Natural killer cell (primary cell): ENCODE measurements at regions of chr10 and their contacts with region 1.

Region 1: DNA sequence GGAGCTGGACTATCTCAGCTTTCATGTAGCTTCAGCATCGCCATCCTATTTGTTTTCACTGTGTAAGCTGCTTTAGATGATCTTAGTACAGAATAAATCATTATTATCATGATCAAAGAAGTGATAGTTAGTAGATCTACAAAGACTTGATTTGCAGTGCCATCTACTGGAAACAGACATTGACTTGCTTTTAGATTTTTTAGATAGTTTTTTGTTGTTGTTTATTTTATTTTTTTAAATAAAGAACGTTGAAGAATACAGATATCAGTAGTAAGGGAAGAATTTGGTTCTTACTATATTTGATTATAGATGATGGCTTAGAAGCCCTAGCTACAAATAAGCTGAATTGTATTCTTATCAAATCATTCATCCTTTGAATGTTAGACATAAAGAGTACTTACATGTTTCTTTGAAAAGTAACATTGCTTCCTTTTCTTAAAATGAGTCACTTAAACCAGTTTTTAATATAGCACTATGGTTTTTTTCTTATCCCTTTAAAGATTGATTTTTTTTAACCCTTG is 6.3 kb upstream of the SFMBT2 start:
- DNase-seq: peak in 1 of 2 donors; percentile 77
- ATAC-seq: peak in 2 of 3 donors; percentile 38 to 60
- H3K4me3 ChIP-seq: no peak overlapping the region
- H3K4me3 Mint-ChIP-seq: no peak overlapping the region
- H3K27ac ChIP-seq: no peak overlapping the region
- H3K27ac Mint-ChIP-seq: no peak overlapping the region
- H3K4me1 ChIP-seq: peaks cover 9% of the 10 kb centered on the region
- H3K4me1 Mint-ChIP-seq: peaks cover 7 to 10% of the 10 kb centered on the region in 2 donors
- H3K27me3 ChIP-seq: peaks cover 6% of the 10 kb centered on the region
- H3K27me3 Mint-ChIP-seq: peaks cover 0 to 8% of the 10 kb centered on the region in 2 donors
- CTCF ChIP-seq: peak; percentile 76

Region 2: DNA sequence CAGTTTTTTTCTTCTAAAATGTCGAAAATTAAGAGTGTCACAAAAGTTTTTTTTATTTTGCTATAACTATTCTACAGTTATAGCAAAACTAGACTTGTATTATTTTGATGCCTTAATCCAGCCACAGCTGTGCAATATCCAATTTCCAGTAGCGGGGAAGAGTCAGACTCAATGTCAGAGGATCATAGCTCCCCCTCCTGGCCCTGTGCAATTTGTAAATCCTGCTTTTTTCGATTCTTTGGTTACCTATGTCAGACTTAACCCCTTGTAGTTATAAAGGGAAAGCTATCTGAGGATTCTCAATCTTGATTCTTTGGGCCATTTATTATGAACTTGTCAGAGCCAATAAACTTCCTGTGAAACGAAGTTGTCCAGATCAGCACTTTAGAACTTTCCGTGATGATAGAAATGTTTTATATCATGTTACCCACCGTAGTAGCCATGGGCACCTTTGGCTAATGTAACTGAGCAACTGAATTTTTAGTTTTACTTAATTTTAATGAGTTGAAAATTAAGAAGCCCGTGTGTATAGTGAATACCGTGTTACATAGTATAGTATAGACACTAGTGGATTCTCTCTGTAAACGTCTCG is 749.4 kb before region 1 on chr10:
- intact Hi-C with region 1: loop called (anchors 5 kb)
- DNase-seq: peak in 1 of 2 donors; percentile 62
- ATAC-seq: no peak
- H3K4me3 ChIP-seq: no peak overlapping the region
- H3K4me3 Mint-ChIP-seq: no peak overlapping the region
- H3K27ac ChIP-seq: no peak overlapping the region
- H3K27ac Mint-ChIP-seq: no peak overlapping the region
- H3K4me1 ChIP-seq: peaks cover 3% of the 10 kb centered on the region
- H3K4me1 Mint-ChIP-seq: peaks cover 6 to 18% of the 10 kb centered on the region in 2 donors
- H3K27me3 ChIP-seq: no peaks in the 10 kb centered on the region
- H3K27me3 Mint-ChIP-seq: peaks cover 0 to 2% of the 10 kb centered on the region in 2 donors
- CTCF ChIP-seq: peak; percentile 25

Region 3: GRCh38 chr10:6843481-6843881 is 573.7 kb before region 1 on chr10:
- intact Hi-C with region 1: loop called (anchors 5 kb)
- DNase-seq: peak in 1 of 2 donors; percentile 30
- ATAC-seq: peak in 1 of 3 donors; percentile 55
- H3K4me3 ChIP-seq: no peak overlapping the region
- H3K4me3 Mint-ChIP-seq: no peak overlapping the region
- H3K27ac ChIP-seq: no peak overlapping the region
- H3K27ac Mint-ChIP-seq: no peak overlapping the region
- H3K4me1 ChIP-seq: no peaks in the 10 kb centered on the region
- H3K4me1 Mint-ChIP-seq: peaks cover 0 to 6% of the 10 kb centered on the region in 2 donors
- H3K27me3 ChIP-seq: no peaks in the 10 kb centered on the region
- H3K27me3 Mint-ChIP-seq: no peaks in the 10 kb centered on the region
- CTCF ChIP-seq: no peak

Region 4: GRCh38 chr10:6920072-6921019 is 496.8 kb before region 1 on chr10:
- intact Hi-C with region 1: loop called (anchors 1 kb)
- DNase-seq: peak; percentile 64 to 88
- ATAC-seq: peak; percentile 95 to 100 (median 98)
- H3K4me3 ChIP-seq: no peak overlapping the region
- H3K4me3 Mint-ChIP-seq: peak overlapping the region; percentile 75
- H3K27ac ChIP-seq: no peak overlapping the region
- H3K27ac Mint-ChIP-seq: peak overlapping the region; percentile 29 to 50
- H3K4me1 ChIP-seq: peaks cover 14% of the 10 kb centered on the region
- H3K4me1 Mint-ChIP-seq: peaks cover 30 to 31% of the 10 kb centered on the region in 2 donors
- H3K27me3 ChIP-seq: no peaks in the 10 kb centered on the region
- H3K27me3 Mint-ChIP-seq: no peaks in the 10 kb centered on the region
- CTCF ChIP-seq: peak; percentile 82

Region 5: GRCh38 chr10:7085913-7086589 is 331.1 kb before region 1 on chr10:
- intact Hi-C with region 1: no loop called
- DNase-seq: no peak
- ATAC-seq: no peak
- H3K4me3 ChIP-seq: no peak overlapping the region
- H3K4me3 Mint-ChIP-seq: no peak overlapping the region
- H3K27ac ChIP-seq: no peak overlapping the region
- H3K27ac Mint-ChIP-seq: no peak overlapping the region
- H3K4me1 ChIP-seq: no peaks in the 10 kb centered on the region
- H3K4me1 Mint-ChIP-seq: peaks cover 17% of the 10 kb centered on the region in 2 donors
- H3K27me3 ChIP-seq: no peaks in the 10 kb centered on the region
- H3K27me3 Mint-ChIP-seq: no peaks in the 10 kb centered on the region
- CTCF ChIP-seq: no peak

Region 6: DNA sequence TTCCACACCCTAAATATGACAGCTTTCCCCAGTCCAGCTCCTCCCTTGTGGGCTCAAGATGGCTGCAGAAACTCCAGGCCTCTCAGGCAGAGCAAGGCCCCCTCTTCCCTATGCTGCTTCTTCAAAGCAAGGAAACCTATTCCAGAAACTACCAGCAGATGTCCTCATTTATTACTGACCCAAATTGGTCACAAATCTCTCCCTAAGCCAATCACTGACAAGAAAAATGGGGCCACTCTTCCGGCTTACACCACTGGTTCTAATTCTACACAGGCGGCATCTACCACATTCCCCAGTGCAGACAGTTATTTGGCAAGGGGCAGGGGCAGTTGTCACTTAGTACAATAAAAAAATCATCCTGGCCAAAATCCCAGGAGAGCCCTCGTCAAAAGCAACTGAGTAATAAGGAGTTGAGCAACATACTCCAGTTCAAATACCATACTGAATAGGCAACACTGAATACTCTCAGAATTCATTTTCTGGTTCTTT is 156.7 kb before region 1 on chr10:
- intact Hi-C with region 1: loop called (anchors 1 kb)
- DNase-seq: peak in 1 of 2 donors; percentile 72
- ATAC-seq: peak; percentile 54 to 73 (median 70)
- H3K4me3 ChIP-seq: no peak overlapping the region
- H3K4me3 Mint-ChIP-seq: peak overlapping the region; percentile 79
- H3K27ac ChIP-seq: no peak overlapping the region
- H3K27ac Mint-ChIP-seq: peak overlapping the region; percentile 86 to 91
- H3K4me1 ChIP-seq: peaks cover 44% of the 10 kb centered on the region
- H3K4me1 Mint-ChIP-seq: peaks cover 55 to 58% of the 10 kb centered on the region in 2 donors
- H3K27me3 ChIP-seq: no peaks in the 10 kb centered on the region
- H3K27me3 Mint-ChIP-seq: no peaks in the 10 kb centered on the region
- CTCF ChIP-seq: peak; percentile 54